Posterior vena cava (tissue), 2 donors: ENCODE measurements at regions of chr4 and their contacts with region 1.

Region 1: GRCh38 chr4:133720001-133720400 is 481.6 kb downstream of the PABPC4L start:
- DNase-seq: no peak

Region 2: DNA sequence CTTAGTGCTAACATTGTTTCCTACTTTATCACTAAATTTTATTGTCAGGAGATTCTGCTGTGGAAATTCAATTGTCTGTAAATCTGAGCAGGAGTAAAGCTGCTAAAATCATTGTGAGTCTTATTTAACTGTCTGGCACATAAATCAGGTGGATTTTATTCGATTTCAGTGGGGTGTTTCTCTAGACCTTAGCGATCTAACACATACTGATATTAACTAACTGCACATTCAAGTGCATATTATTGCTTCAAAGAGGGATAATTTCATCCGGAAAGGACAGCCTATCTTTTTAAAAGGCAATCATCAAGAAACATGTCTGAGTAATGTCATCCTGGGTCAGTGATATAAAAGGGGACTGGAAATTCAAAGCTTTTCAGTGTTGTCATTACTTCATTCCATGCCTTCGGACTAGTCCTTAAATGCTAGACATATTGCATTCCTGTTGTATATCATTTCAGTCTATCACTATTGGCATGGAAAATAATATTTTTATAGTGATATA is 182.2 kb before region 1 on chr4:
- intact Hi-C with region 1: no loop called
- DNase-seq: no peak

Region 3: GRCh38 chr4:133638751-133639150 is 81.2 kb before region 1 on chr4:
- intact Hi-C with region 1: loop called in 1 of 2 experiments (anchors 5 kb)
- DNase-seq: no peak

Region 4: GRCh38 chr4:134216436-134216835 is 496.4 kb after region 1 on chr4:
- intact Hi-C with region 1: no loop called
- DNase-seq: no peak